Posterior vena cava (tissue), 2 donors: ENCODE measurements at regions of chr11 and their contacts with region 1.

Region 1: GRCh38 chr11:112655371-112655770 is 305.8 kb upstream of the NCAM1 start:
- DNase-seq: peak; percentile 88

Region 2: DNA sequence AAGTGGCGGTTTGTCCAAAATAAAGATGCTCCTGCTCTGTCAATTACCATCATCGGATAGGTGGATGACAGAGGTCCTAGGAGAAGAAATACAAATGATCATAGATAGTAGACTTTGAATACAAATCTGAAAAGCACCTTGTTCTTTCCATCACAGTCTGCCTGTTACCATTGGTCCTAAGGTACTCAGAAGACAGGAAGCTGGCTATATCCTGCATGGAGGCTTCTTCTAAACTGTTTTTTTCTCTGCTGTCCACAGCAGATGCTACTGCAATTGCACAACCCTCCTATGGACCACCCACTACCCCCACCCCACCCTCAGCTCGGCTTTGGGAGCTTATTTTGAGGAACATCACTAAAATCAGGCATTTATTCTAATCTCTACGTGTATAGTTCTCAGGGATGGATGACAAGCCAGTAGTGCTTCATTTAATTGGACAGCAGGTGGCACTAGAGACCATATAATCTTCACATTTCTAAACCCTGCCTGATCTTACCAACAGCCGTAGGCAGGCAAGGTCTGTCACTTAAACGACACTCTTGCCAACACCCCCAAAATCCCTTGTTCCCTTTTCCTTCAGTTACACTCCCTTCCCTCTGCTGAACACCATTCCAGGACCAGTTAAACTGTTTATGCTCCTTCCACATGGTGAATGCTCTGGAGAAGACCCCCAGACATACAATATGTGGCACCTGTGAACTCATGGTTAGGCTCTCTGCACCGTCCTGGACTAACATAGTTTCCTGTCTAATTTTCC is 435.7 kb before region 1 on chr11:
- intact Hi-C with region 1: no loop called
- DNase-seq: no peak

Region 3: DNA sequence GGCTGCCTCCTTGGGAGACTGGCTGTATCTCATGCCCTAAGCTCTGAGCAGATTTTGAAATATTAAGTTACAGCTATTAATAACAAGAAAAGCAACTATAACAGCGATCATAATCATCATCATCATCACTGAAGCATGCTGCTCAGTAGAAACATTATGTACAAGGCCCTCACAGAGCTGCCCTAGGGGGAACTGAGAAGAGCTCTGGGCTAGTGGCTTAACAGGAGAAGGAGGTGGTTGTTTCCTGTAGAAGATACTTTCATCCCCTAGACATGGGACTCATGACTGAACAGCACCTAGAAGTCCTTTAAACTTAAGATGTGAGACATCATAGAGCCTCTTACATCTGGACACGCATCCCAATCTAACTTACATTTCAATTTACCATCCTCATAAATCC is 61.9 kb before region 1 on chr11:
- intact Hi-C with region 1: loop called in 1 of 2 experiments (anchors 2 kb)
- DNase-seq: no peak